Common myeloid progenitor, CD34-positive (primary cell): ENCODE measurements at regions of chr6 and their contacts with region 1.

Region 1: DNA sequence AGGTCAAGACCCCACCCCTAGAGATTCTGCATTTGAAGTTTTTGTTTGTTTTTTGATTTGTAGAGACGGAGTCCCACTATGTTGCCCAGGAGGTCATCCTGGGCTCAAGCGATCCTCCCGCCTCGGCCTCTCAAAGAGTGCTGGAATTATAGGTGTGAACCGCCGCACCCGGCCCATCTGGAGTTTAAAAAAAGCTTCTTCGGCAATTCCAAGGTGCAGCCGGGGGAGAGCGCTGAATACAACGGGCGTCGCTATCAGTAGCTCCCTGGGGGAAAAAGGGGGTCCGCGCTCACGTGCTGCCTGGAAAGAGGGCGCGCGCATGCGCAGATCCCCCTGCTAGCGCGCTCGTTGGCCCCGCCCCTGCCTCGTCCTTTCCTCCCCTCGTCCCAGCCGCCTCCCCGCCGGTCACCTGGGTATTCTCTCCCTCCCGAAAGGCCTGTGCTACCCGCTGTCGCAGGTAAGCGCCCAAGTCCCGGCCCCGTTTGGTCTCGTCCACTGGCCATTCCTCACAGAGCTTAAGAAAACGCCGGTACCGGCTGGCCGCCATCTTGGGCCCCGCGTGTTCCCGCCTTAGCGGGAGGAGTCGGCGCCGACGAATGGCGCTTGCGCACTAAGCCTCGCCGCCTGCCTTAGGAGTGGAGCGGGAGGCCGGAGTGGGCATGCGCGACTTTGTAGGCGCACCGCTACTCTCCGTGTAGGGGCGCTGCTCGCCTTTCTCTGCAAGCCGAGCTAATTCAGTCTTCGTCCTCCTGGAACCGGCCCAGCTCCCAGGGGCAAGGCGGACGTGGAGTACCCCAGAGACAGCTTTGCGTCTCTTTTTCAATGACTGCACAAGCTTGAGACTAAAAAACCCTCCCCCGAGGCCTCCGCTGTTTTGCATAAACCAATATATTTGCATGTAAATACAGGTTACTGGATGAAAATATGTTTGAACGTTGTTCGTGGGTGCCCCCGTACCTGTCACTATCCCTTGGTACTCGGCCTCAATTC is at the start of gene UQCC2:
- DNase-seq: peak; percentile 96 to 98 (median 96)
- H3K4me3 ChIP-seq: peak within 1 kb of the TSS; percentile 60 to 97 (median 83)
- H3K27ac ChIP-seq: peak within 1 kb of the TSS; percentile 89 to 93
- H3K4me1 ChIP-seq: peaks cover 9 to 44% (median 30%) of the 10 kb centered on the region in 4 experiments
- H3K27me3 ChIP-seq: no peaks in the 10 kb centered on the region

Region 2: GRCh38 chr6:33579828-33580714 is 131.4 kb before region 1 on chr6 and contains the start of gene BAK1:
- CTCF ChIA-PET with region 1: interaction called, 244 read pairs
- POLR2A ChIA-PET with region 1: no interaction called
- DNase-seq: peak; percentile 83 to 90 (median 85)
- H3K4me3 ChIP-seq: peak within 1 kb of the TSS; percentile 64 to 92 (median 82)
- H3K27ac ChIP-seq: peak within 1 kb of the TSS; percentile 83 to 88
- H3K4me1 ChIP-seq: peaks cover 0 to 42% (median 35%) of the 10 kb centered on the region in 4 experiments
- H3K27me3 ChIP-seq: no peaks in the 10 kb centered on the region

Region 3: GRCh38 chr6:33727932-33728331 is 16.5 kb after region 1 on chr6:
- CTCF ChIA-PET with region 1: interaction called, 11 read pairs
- POLR2A ChIA-PET with region 1: no interaction called
- DNase-seq: no peak
- H3K4me3 ChIP-seq: no peak overlapping the region
- H3K27ac ChIP-seq: no peak overlapping the region
- H3K4me1 ChIP-seq: no peaks in the 10 kb centered on the region
- H3K27me3 ChIP-seq: peaks cover 0 to 10% (median 4%) of the 10 kb centered on the region in 5 experiments

Region 4: DNA sequence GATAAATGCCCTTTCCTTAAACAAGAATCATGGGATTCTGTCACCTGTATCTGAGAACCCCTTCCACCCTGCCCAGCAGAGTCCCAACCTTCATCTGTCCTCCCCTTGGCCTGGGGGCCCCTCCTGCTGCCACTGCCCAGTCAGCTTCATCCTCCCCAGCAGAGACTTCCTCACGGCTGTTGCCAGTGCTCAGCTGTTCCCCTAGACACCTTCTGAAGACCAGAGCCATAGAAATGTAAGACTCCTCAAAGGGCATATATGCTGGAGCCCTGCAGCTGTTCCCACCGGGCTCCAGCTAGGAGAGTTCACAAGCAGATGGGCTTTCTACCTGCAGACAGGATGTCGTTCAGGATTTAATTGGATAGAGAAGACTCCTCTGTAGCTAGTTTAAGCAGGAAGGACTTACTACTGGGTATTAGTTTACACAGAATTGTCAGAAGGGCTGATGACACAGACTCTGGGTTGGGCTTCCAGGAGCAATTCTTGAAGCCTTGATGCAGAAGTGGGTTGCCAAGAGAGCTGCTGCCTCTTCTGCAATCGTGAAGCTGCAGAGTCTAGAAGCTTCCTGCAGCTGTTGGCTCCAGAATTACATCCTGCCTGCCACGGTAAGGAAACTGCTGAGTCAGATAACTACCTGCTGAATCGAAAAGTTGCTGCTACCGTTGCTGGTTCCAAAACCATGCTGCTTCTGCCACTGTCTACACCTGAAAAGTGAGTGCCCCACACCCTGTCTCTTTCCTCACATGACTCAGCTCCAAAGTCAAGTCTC is 149.5 kb after region 1 on chr6:
- CTCF ChIA-PET with region 1: no interaction called
- POLR2A ChIA-PET with region 1: no interaction called
- DNase-seq: peak; percentile 86 to 98 (median 97)
- H3K4me3 ChIP-seq: no peak overlapping the region
- H3K27ac ChIP-seq: no peak overlapping the region
- H3K4me1 ChIP-seq: peaks cover 2 to 49% (median 44%) of the 10 kb centered on the region in 4 experiments
- H3K27me3 ChIP-seq: peaks cover 0 to 34% (median 19%) of the 10 kb centered on the region in 5 experiments